A673 (cell line): ENCODE measurements at regions of chr6 and their contacts with region 1.

Region 1: GRCh38 chr6:42547407-42548329 is 16.2 kb upstream of the UBR2 start:
- DNase-seq: peak; percentile 88
- H3K4me3 ChIP-seq: peak overlapping the region; percentile 52
- H3K27ac ChIP-seq: peak overlapping the region; percentile 57
- H3K4me1 ChIP-seq: peaks cover 5% of the 10 kb centered on the region
- H3K27me3 ChIP-seq: no peaks in the 10 kb centered on the region
- CTCF ChIP-seq: peak; percentile 100

Region 2: DNA sequence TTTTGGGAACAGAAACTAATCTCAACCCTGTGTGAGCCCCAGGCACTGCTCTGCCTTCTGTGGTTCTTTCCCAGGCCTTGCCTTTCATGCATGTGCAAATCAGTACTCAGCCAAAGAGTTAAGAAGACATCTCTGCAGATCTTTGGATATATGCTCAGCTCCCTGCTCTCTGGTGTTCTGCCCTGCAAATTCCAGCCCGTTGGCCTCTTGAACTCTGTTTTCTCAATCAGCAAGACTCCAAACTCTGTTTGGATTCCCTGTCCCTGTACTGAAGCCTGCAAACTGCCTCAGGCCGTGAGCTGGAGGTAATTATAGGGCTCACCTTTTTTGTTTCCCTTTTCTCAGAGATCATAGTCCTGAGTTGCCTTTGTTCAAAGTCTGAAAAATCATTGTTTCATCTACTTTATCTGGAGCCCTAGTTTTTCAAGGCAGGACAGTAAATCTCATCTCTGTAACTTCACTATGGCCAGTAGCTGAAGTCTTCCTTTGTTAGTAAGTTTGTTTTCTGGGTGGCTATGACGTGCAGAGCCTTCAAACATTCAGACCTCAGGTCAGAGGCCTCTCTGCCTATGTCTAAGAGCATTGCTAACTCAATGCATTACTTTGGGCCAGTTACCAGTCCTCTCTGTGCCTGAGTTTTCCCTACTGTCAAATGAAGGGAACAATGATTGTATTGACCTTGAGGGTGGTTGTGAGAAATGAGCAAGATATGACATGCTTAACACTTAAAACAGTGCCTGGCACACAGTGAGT is 925.3 kb before region 1 on chr6:
- CTCF ChIA-PET with region 1: no interaction called
- POLR2A ChIA-PET with region 1: no interaction called
- intact Hi-C with region 1: no loop called
- DNase-seq: no peak
- H3K4me3 ChIP-seq: no peak overlapping the region
- H3K27ac ChIP-seq: no peak overlapping the region
- H3K4me1 ChIP-seq: peaks cover 26% of the 10 kb centered on the region
- H3K27me3 ChIP-seq: no peaks in the 10 kb centered on the region
- CTCF ChIP-seq: no peak

Region 3: DNA sequence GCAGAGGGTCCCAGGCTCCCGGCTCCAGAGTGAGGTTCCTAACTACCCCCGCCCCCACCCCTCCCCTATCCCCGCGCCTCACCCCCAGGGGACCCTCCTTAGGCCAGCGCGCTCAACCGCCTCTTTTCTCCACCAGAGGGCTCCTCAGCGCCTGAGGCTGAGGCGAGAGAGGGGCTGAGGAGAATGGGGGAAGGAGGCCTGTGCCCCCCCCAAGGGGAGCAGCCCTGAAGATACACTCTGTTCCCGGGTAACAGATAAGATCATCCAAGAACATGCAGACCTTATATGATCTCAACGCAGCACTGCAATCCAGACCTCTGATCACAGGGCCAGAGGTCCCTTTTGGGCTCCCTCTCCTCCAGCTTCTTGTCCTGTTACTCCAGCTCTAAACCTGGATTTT is 286.7 kb before region 1 on chr6:
- CTCF ChIA-PET with region 1: interaction called, 43 read pairs
- POLR2A ChIA-PET with region 1: no interaction called
- intact Hi-C with region 1: loop called (anchors 2 kb)
- DNase-seq: peak; percentile 66
- H3K4me3 ChIP-seq: peak overlapping the region; percentile 39
- H3K27ac ChIP-seq: no peak overlapping the region
- H3K4me1 ChIP-seq: peaks cover 18% of the 10 kb centered on the region
- H3K27me3 ChIP-seq: no peaks in the 10 kb centered on the region
- CTCF ChIP-seq: peak; percentile 73

Region 4: DNA sequence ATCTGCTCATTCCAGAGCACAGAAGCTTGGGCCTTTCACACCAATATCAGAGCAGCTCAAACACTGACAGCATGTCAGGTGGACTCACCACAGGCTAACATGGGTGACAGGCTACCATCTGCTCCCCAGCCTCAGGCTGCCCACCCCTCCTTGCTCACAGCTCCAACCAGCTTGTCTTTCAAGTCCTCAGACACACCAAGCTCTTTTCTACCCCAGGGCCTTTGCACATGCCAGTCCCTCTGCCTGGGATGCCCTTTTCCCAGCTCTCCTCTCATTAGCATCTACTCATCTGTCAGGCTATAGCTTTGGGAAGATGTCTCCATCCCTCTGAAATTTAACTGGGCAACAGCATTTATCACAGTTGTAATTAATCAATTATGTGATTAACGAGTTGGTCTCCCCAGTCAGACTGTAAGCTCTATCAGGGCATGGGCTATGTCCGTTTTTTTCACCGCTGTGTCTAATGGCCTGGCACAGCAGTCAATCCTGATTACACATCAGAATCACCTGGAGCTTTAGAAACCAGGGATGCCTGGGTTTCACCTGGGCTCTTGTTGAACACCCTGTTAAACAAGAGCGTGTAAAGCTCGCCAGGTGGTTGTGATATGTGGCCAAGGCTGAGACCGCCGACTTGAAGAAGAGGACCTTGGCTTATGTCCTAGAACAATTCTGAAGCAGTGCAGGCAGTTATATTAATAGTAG is 241.1 kb before region 1 on chr6:
- CTCF ChIA-PET with region 1: interaction called, 12 read pairs
- POLR2A ChIA-PET with region 1: no interaction called
- intact Hi-C with region 1: loop called (anchors 5 kb)
- DNase-seq: no peak
- H3K4me3 ChIP-seq: no peak overlapping the region
- H3K27ac ChIP-seq: no peak overlapping the region
- H3K4me1 ChIP-seq: no peaks in the 10 kb centered on the region
- H3K27me3 ChIP-seq: no peaks in the 10 kb centered on the region
- CTCF ChIP-seq: no peak

Region 5: GRCh38 chr6:42315991-42316378 is 231.7 kb before region 1 on chr6:
- CTCF ChIA-PET with region 1: interaction called, 12 read pairs
- POLR2A ChIA-PET with region 1: no interaction called
- intact Hi-C with region 1: no loop called
- DNase-seq: no peak
- H3K4me3 ChIP-seq: no peak overlapping the region
- H3K27ac ChIP-seq: no peak overlapping the region
- H3K4me1 ChIP-seq: no peaks in the 10 kb centered on the region
- H3K27me3 ChIP-seq: no peaks in the 10 kb centered on the region
- CTCF ChIP-seq: no peak

Region 6: GRCh38 chr6:42428326-42429041 is 119.2 kb before region 1 on chr6:
- CTCF ChIA-PET with region 1: no interaction called
- POLR2A ChIA-PET with region 1: no interaction called
- intact Hi-C with region 1: no loop called
- DNase-seq: no peak
- H3K4me3 ChIP-seq: no peak overlapping the region
- H3K27ac ChIP-seq: peak overlapping the region; percentile 5
- H3K4me1 ChIP-seq: peaks cover 16% of the 10 kb centered on the region
- H3K27me3 ChIP-seq: no peaks in the 10 kb centered on the region
- CTCF ChIP-seq: no peak

Region 7: DNA sequence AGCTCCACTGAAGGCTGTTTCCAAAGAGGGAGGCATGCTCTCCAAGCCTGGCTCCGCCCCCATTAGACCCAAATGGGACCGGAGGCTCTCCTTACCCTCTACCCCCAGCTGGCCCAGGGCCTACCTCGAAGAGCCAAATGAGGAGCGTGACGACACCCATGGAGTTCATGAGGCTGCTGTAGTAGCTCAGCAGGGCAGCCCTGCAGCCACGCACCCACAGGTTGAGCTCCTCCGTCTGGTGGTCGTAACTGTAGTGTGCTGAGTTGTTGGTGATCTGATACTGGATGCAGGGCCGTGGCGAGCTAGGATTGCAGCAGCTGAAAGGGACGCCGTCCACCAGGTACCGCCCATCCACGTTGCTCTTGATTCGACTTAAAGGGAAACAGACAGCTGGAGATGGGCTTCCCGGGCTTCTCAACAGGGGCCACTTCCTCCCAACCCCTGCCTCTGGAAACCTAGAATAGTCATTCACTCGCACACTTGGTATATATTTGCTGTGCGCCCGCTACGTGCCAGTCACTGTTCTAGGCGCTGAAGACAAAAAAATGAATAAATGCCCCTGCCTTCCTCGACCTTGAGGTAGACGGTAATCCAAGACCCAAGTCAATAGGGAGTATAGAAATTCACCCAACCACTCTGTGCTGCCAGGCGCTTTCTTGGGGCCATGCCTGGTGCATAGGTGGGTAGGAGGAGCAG is 156.7 kb after region 1 on chr6:
- CTCF ChIA-PET with region 1: no interaction called
- POLR2A ChIA-PET with region 1: no interaction called
- intact Hi-C with region 1: no loop called
- DNase-seq: peak; percentile 67
- H3K4me3 ChIP-seq: peak overlapping the region; percentile 40
- H3K27ac ChIP-seq: no peak overlapping the region
- H3K4me1 ChIP-seq: no peaks in the 10 kb centered on the region
- H3K27me3 ChIP-seq: no peaks in the 10 kb centered on the region
- CTCF ChIP-seq: no peak